ENCODE measurements at regions of chr16 and their contacts with region 1.

Region 1: GRCh38 chr16:27367461-27368357 is 34.3 kb upstream of the IL21R start:
- DNase-seq: peak; percentile 87
- ATAC-seq: peak; percentile 82 to 88
- H3K4me3 ChIP-seq: peak overlapping the region; percentile 27
- H3K27ac ChIP-seq: peak overlapping the region; percentile 59
- H3K4me1 ChIP-seq: peaks cover 31% of the 10 kb centered on the region
- H3K27me3 ChIP-seq: no peaks in the 10 kb centered on the region
- CTCF ChIP-seq: peak; percentile 86

Region 2: DNA sequence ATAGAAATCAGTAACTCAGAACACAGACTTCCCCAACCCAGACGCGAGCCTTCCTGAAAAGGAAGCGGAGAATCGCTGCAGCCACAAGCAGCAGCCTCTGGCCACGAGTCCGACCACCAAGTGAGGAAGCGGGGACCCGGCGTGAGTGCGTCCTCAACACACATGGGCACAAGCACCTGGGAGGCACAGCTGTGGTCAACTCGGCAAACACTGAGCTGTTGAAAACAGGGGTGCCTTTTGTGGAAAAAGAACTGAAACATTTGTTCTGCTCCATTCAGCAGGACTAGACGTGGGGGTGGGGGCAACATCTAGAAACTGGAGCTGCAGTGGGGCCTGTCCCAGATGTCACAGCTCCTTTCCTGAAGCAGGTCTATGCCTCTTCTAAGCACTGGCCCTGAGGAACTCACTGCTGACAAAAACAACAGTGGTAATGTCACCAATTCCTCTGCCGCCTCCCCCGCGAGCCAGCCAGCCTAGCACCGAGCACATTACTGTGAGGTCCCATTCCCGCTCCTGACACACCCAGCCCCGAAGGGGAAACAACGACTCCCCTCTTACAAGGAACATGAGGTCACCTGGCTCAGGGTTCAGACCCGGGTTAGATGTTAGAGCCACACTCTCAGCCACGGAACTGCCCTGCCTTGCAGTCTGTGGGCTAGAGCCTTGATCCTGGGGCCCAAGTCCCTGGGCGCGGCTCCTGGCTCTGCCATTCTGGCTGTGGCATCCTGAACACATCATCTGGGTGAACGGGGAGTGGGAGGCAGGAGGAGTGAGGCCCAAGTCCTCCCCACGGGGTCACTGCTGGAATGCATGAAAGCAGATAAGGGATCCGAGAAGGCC is 135.4 kb before region 1 on chr16:
- intact Hi-C with region 1: loop called (anchors 5 kb)
- DNase-seq: peak; percentile 50
- ATAC-seq: no peak
- H3K4me3 ChIP-seq: no peak overlapping the region
- H3K27ac ChIP-seq: peak overlapping the region; percentile 61
- H3K4me1 ChIP-seq: peaks cover 66% of the 10 kb centered on the region
- H3K27me3 ChIP-seq: no peaks in the 10 kb centered on the region
- CTCF ChIP-seq: no peak

Measured in lower lobe of right lung (tissue), 2 donors.